ENCODE measurements at regions of chr11 and their contacts with region 1.

Region 1: DNA sequence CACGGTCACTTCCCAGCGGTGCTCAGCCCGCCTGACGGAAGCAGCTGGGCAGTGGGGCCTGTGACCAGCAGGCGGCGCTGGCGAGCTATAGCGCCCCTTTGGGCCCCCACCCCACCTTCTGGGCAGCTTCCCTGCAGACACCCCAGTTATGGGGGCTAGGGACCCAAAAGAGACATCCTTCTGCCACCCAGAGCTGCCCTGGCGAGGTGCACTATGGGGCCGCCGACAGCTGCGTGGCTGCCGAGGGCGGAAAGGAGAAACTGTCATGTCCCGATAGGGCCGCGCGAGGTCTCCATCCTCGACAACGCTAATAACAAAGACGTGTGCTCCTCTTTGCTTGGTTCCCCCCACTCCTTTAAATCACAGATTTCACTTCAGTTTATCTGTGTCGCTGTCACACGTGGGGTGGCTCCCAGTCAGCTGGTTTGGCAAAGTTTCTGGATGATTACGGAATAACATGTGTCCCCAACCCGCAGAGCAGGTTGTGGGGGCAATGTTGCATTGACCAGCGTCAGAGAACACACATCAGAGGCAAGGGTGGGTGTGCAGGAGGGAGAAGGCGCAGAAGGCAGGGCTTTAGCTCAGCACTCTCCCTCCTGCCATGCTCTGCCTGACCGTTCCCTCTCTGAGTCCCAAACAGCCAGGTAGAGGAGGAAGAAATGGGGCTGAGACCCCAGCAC is 674 bp upstream of the MYO7A start:
- DNase-seq: peak in 1 of 2 donors; percentile 77
- ATAC-seq: peak; percentile 68

Region 2: GRCh38 chr11:77003954-77004353 is 123.4 kb before region 1 on chr11:
- intact Hi-C with region 1: no loop called
- DNase-seq: no peak
- ATAC-seq: no peak

Region 3: DNA sequence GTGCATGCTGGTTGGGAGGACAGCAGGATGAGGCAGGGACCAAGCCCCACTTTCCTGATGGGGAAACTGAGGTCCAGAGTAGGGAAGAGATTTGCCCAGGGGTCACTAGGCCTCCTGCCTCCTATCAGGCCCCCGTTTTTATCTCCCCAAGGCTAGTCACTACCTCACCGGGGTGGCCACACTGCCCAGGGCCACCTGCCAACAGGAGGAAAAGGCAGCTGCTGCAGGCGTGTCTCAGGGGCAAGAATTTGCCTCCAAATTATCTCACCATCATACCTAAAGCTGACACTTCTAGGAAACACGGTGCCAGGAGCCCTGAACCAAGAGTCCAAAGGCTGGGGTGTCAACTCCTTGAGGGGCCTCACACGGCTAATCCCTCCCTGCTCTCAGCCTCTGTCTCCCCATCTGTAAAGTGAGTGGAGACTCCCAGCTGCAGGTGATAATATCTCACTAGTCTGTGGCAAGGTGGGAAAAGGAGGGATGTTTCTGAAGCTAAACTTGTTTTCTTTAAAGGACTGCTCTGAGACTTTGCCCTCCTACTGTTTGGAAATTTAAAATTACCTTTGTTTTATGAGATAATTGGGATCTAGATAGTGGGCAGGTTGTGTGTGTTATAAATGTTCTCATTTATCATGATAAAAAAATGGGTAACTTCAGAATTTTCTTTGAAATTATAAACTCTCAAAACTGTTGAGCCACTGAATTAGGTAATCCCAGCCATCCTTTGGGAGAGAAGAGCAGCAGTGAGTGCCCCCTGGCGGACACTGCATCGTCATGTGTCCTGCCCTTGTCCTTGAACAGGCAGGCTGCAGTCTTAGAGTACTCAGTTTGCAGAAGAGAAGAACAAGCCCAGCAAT is 60.6 kb after region 1 on chr11:
- intact Hi-C with region 1: loop called in 1 of 2 experiments (anchors 5 kb)
- DNase-seq: peak; percentile 79 to 92
- ATAC-seq: peak; percentile 70

Region 4: GRCh38 chr11:77547863-77548551 is 420.6 kb after region 1 on chr11:
- intact Hi-C with region 1: loop called (anchors 5 to 10 kb)
- DNase-seq: peak in 1 of 2 donors; percentile 19
- ATAC-seq: peak; percentile 91

Region 5: GRCh38 chr11:77557554-77557953 is 430.2 kb after region 1 on chr11:
- intact Hi-C with region 1: loop called in 1 of 2 experiments (anchors 10 kb)
- DNase-seq: peak in 1 of 2 donors; percentile 35
- ATAC-seq: no peak

Measured in left colon (tissue), 2 donors.